T-cell (primary cell): ENCODE measurements at regions of chr2 and their contacts with region 1.

Region 1: GRCh38 chr2:28621172-28622100 is 125.6 kb downstream of the PLB1 start:
- DNase-seq: peak; percentile 40 to 94 (median 82)
- ATAC-seq: peak; percentile 89 to 92 (median 91)
- H3K4me3 ChIP-seq: peak overlapping the region; percentile 22 to 32
- H3K4me3 Mint-ChIP-seq: peak overlapping the region; percentile 66 to 83 (median 72)
- H3K27ac ChIP-seq: peak overlapping the region; percentile 99
- H3K27ac Mint-ChIP-seq: peak overlapping the region; percentile 98 to 99
- H3K4me1 ChIP-seq: peaks cover 63 to 87% of the 10 kb centered on the region in 2 experiments
- H3K4me1 Mint-ChIP-seq: peaks cover 25 to 92% (median 89%) of the 10 kb centered on the region in 3 donors
- H3K27me3 ChIP-seq: no peaks in the 10 kb centered on the region
- H3K27me3 Mint-ChIP-seq: no peaks in the 10 kb centered on the region

Region 2: GRCh38 chr2:27655155-27655951 is 966.1 kb before region 1 on chr2:
- CTCF ChIA-PET with region 1: no interaction called
- POLR2A ChIA-PET with region 1: no interaction called
- DNase-seq: no peak
- ATAC-seq: no peak
- H3K4me3 ChIP-seq: no peak overlapping the region
- H3K4me3 Mint-ChIP-seq: no peak overlapping the region
- H3K27ac ChIP-seq: no peak overlapping the region
- H3K27ac Mint-ChIP-seq: no peak overlapping the region
- H3K4me1 ChIP-seq: no peaks in the 10 kb centered on the region
- H3K4me1 Mint-ChIP-seq: peaks cover 11 to 28% (median 26%) of the 10 kb centered on the region in 3 donors
- H3K27me3 ChIP-seq: no peaks in the 10 kb centered on the region
- H3K27me3 Mint-ChIP-seq: no peaks in the 10 kb centered on the region

Region 3: GRCh38 chr2:28566521-28567041 is 54.9 kb before region 1 on chr2:
- CTCF ChIA-PET with region 1: interaction called in 1 of 2 experiments, 7 read pairs
- POLR2A ChIA-PET with region 1: interaction called in 1 of 2 experiments, 16 read pairs
- DNase-seq: peak; percentile 70 to 95 (median 87)
- ATAC-seq: peak; percentile 95 to 99 (median 96)
- H3K4me3 ChIP-seq: peak overlapping the region; percentile 67 to 90
- H3K4me3 Mint-ChIP-seq: peak overlapping the region; percentile 86 to 89 (median 87)
- H3K27ac ChIP-seq: no peak overlapping the region
- H3K27ac Mint-ChIP-seq: peak overlapping the region; percentile 67 to 89
- H3K4me1 ChIP-seq: peaks cover 8 to 18% of the 10 kb centered on the region in 2 experiments
- H3K4me1 Mint-ChIP-seq: peaks cover 9 to 19% (median 16%) of the 10 kb centered on the region in 3 donors
- H3K27me3 ChIP-seq: peaks cover 0 to 3% of the 10 kb centered on the region in 2 experiments
- H3K27me3 Mint-ChIP-seq: no peaks in the 10 kb centered on the region

Region 4: GRCh38 chr2:28640260-28641221 is 19.1 kb after region 1 on chr2:
- CTCF ChIA-PET with region 1: no interaction called
- POLR2A ChIA-PET with region 1: no interaction called
- DNase-seq: no peak
- ATAC-seq: no peak
- H3K4me3 ChIP-seq: no peak overlapping the region
- H3K4me3 Mint-ChIP-seq: no peak overlapping the region
- H3K27ac ChIP-seq: no peak overlapping the region
- H3K27ac Mint-ChIP-seq: no peak overlapping the region
- H3K4me1 ChIP-seq: no peaks in the 10 kb centered on the region
- H3K4me1 Mint-ChIP-seq: peaks cover 0 to 7% (median 6%) of the 10 kb centered on the region in 3 donors
- H3K27me3 ChIP-seq: no peaks in the 10 kb centered on the region
- H3K27me3 Mint-ChIP-seq: no peaks in the 10 kb centered on the region

Region 5: GRCh38 chr2:28687640-28688381 is 66.4 kb after region 1 on chr2:
- CTCF ChIA-PET with region 1: no interaction called
- POLR2A ChIA-PET with region 1: interaction called in 1 of 2 experiments, 10 read pairs
- DNase-seq: no peak
- ATAC-seq: no peak
- H3K4me3 ChIP-seq: no peak overlapping the region
- H3K4me3 Mint-ChIP-seq: no peak overlapping the region
- H3K27ac ChIP-seq: no peak overlapping the region
- H3K27ac Mint-ChIP-seq: no peak overlapping the region
- H3K4me1 ChIP-seq: no peaks in the 10 kb centered on the region
- H3K4me1 Mint-ChIP-seq: peaks cover 8 to 11% (median 10%) of the 10 kb centered on the region in 3 donors
- H3K27me3 ChIP-seq: no peaks in the 10 kb centered on the region
- H3K27me3 Mint-ChIP-seq: no peaks in the 10 kb centered on the region

Region 6: DNA sequence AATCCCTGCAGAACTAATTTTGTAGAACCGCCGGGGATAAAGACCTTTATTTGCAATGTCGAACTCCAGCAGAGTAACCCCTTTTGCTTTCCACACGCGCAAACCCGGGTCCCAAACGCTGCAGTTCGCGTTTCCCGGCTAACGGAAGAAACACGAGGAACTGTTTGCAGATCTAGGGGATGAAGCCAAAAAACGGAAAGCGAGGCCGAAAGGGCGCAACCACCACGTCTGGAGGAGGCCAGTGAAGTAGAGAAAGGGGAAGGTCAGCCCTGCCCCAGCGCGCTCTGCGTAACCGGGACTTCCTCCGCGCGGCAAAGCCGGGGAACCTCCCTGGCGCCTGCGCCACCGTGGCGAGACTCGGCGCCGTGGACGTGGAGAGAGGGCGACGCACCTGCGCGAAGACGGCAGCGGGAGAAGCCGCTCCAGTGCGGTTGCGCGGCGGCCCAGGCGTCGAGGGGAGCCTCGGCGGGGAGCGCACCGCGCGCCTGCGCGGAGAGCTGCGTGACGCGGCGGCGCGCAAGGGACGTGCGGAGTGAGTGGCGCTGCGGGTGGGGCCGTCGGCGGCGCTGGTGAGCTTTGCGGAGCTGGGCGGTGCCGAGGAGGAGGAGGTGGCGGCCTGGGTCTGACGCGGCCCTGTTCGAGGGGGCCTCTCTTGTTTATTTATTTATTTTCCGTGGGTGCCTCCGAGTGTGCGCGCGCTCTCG is 130.0 kb after region 1 on chr2 and contains the start of gene PPP1CB:
- CTCF ChIA-PET with region 1: interaction called, 6 to 7 read pairs
- POLR2A ChIA-PET with region 1: interaction called, 9 to 14 read pairs
- DNase-seq: peak; percentile 92 to 99 (median 97)
- ATAC-seq: peak; percentile 86 to 90 (median 88)
- H3K4me3 ChIP-seq: peak within 1 kb of the TSS; percentile 83 to 98
- H3K4me3 Mint-ChIP-seq: peak within 1 kb of the TSS; percentile 94 to 97 (median 95)
- H3K27ac ChIP-seq: peak within 1 kb of the TSS; percentile 97
- H3K27ac Mint-ChIP-seq: peak within 1 kb of the TSS; percentile 95 to 97
- H3K4me1 ChIP-seq: peaks cover 34 to 36% of the 10 kb centered on the region in 2 experiments
- H3K4me1 Mint-ChIP-seq: peaks cover 61 to 70% (median 65%) of the 10 kb centered on the region in 3 donors
- H3K27me3 ChIP-seq: no peaks in the 10 kb centered on the region
- H3K27me3 Mint-ChIP-seq: no peaks in the 10 kb centered on the region
- total RNA-seq, gene PPP1CB: 182 to 233 (median 190) TPM